ENCODE measurements at regions of chr6 and their contacts with region 1.

Region 1: DNA sequence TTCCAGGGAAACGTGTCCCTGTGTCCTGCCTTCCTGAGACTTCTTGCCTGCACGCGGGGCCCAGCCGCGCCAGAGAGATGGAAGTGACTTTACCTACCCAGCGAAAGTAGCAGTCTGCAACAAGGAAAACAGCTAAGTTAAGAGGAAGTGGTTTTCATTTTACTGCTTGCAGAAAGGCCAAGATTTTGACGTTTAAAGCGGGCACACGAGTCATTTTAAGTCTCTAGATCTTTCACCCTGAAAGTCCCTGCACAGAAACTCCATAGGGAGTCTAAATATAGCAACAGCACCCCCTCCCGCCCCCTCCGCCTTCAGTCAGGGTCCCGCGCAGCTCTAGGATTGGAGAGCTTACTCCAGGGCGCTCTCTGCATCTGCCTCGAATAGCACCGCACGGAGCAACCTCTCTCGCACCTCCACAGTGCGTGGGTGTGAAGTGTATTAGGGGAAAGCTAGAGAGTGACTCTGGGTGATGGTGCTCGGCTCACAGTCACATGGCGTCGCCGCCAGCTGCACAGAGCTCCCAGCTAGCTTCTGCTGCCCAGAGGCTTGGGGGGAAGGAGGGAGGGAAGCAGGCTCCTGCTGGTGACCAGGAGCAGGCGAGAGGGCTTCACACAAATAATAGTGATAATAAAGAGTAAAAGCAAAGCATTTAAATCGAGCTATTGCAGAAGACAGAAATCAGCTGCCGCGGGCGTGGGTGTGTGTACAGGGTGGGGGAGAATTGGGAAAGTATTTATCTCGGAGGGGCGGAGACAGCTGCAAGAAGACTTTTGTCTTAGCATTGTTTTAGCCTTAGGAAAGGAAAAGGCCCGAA is 1.8 kb upstream of the KCNQ5 start:
- DNase-seq: peak; percentile 19
- H3K4me3 ChIP-seq: peak overlapping the region; percentile 35
- H3K27ac ChIP-seq: no peak overlapping the region
- H3K4me1 ChIP-seq: no peaks in the 10 kb centered on the region
- H3K27me3 ChIP-seq: peaks cover 37% of the 10 kb centered on the region
- CTCF ChIP-seq: no peak

Region 2: GRCh38 chr6:72533606-72534005 is 86.5 kb before region 1 on chr6:
- intact Hi-C with region 1: no loop called
- DNase-seq: no peak
- H3K4me3 ChIP-seq: no peak overlapping the region
- H3K27ac ChIP-seq: no peak overlapping the region
- H3K4me1 ChIP-seq: no peaks in the 10 kb centered on the region
- H3K27me3 ChIP-seq: no peaks in the 10 kb centered on the region
- CTCF ChIP-seq: no peak

Region 3: DNA sequence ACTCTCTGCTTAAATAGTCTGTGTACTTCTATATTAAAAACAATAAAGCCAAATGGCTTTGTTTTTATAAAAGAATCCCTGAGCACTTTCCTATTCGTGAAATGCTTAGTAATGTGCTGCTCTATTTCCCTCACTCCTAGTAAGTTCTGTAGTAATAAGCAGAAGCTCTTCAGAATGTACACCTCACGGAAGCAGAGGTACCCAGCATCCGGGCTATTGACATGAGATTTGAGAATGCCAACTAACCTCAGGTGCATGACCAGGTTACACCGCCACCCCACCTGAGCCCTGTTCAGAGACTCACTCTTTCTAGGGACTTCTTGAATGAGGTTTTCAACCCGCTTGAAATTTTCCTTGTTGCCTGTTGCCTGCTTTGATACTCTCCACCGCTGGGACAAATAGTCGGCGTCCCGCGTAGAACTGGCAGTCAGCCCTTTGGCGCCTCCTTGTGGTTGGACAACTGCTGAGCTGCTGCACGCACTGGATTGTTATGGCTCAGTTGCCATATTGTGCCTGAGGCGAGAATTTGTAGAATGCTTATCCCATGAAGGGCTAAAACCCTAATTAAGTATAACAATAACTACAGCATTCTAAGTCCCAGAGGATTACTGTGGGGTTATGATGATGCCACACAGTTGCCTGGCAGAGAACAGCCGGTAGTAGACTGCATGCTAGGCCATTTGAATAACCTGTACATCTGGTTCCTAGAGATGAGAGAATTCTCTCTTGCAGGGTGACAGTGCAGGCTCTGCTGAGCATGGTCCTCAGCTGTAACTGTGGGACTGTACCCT is 509.8 kb after region 1 on chr6:
- intact Hi-C with region 1: loop called (anchors 5 kb)
- DNase-seq: peak; percentile 71
- H3K4me3 ChIP-seq: no peak overlapping the region
- H3K27ac ChIP-seq: no peak overlapping the region
- H3K4me1 ChIP-seq: no peaks in the 10 kb centered on the region
- H3K27me3 ChIP-seq: no peaks in the 10 kb centered on the region
- CTCF ChIP-seq: peak; percentile 86